IMR-90 (cell line): ENCODE measurements at regions of chr10 and their contacts with region 1.

Region 1: GRCh38 chr10:48551861-48552591 is 52.8 kb downstream of the ARHGAP22 start:
- DNase-seq: peak; percentile 59
- ATAC-seq: peak; percentile 88
- H3K4me3 ChIP-seq: no peak overlapping the region
- H3K27ac ChIP-seq: no peak overlapping the region
- H3K4me1 ChIP-seq: no peaks in the 10 kb centered on the region; the same call in 1 of the 2 replicates
- H3K27me3 ChIP-seq: no peaks in the 10 kb centered on the region
- CTCF ChIP-seq: peak; percentile 86
- POLR2A ChIP-seq: 0 out of 2 replicates have a peak, but pooled peaks have one; percentile 28
- RAD21 ChIP-seq: peak; percentile 86

Region 2: DNA sequence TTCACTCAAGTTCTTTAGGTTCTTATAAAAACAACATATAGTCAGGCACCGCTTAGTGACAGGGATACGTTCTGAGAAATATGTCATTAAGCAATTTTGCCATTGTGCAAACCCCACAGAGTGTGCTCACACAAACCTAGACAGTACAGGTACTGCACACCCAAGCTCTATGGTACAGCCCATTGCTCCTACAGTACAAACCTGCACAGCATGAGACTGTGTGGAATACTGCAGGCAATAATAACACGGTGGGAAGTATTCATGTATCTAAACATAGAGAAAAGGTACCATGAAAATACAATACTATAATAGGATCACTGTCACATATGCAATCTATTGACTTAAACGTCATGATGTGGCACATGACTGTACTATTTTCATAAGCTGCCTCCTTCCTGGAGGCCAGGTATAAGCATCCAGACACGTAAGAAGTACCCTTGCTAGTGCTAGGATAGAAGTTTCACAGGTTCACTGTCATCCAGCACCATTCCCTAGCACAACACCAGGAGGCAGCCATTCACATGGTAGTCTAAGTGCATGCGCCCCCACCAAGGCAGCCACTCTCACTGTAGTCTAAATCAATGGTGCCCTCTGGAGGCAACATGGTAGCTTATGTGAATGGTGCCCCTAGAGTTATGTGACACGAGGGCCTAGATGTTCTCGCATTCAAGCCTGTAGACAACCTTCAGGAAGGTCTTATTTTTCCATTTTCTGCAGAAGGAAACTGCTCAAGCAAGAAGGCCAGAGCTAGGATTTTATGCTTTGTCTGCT is 45.7 kb before region 1 on chr10:
- CTCF ChIA-PET with region 1: no interaction called
- POLR2A ChIA-PET with region 1: no interaction called
- dilution Hi-C with region 1: no loop called
- in situ Hi-C with region 1: no loop called
- intact Hi-C with region 1: no loop called
- DNase-seq: peak; percentile 56
- ATAC-seq: peak; percentile 71
- H3K4me3 ChIP-seq: no peak overlapping the region
- H3K27ac ChIP-seq: no peak overlapping the region
- H3K4me1 ChIP-seq: peaks cover 14% of the 10 kb centered on the region
- H3K27me3 ChIP-seq: no peaks in the 10 kb centered on the region
- CTCF ChIP-seq: peak; percentile 55
- POLR2A ChIP-seq: no peak
- RAD21 ChIP-seq: peak; percentile 63

Region 3: DNA sequence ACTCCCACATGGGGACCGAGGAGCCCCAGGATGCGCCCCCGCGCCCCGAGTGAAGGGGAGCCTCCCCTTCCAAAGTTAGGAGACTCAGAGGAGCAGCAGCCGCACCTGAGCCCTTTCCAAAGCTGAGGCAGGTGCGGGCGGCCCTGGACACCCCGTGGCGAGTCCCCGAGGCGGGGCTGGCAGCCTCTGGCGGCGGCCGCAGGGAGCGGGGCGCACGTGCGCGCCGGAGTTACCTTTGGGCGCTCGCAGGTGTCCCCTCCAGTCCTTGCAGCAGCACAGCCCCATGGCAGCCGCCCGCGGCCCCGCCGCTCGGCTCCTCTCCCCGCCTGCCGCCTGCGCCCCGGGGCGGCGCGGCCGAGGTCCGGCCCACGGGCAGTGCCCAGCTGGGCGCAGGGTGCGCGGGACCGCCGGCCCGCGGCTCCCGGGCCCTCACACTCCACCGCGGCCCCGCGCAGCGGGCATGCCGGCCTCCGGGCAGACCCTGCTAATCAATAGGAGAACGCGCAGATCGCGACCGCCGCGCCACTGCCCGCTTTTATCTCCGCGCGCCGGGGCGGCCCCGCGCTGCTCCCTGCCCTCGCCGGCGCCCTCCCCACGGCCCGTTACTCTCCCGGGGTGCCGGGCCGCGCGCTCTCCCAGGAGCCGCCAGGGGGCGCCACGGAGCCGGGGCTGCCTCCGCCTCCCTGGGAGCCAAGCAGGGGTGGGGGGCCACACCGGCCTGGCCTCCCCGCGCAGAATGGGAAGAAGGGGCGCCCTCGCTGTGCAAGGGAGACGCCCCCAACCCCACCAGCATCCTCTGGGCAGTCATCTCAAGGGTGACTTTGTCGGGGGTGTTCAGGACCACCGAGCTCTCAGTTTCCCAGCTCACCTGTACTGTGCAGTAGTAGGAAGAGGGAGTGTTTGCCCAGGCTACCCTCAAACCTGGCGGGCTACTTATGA is 27.9 kb before region 1 on chr10:
- CTCF ChIA-PET with region 1: no interaction called
- POLR2A ChIA-PET with region 1: no interaction called
- dilution Hi-C with region 1: no loop called
- in situ Hi-C with region 1: no loop called
- intact Hi-C with region 1: loop called (anchors 2 kb)
- DNase-seq: no peak
- ATAC-seq: peak; percentile 55
- H3K4me3 ChIP-seq: peak overlapping the region; percentile 42
- H3K27ac ChIP-seq: peak overlapping the region; percentile 15; the same call in 1 of the 2 replicates
- H3K4me1 ChIP-seq: peaks cover 21% of the 10 kb centered on the region
- H3K27me3 ChIP-seq: no peaks in the 10 kb centered on the region
- CTCF ChIP-seq: peak; percentile 59
- POLR2A ChIP-seq: no peak
- RAD21 ChIP-seq: peak; percentile 30

Region 4: GRCh38 chr10:48608279-48608681 is 56.3 kb after region 1 on chr10:
- CTCF ChIA-PET with region 1: interaction called, 3 read pairs
- POLR2A ChIA-PET with region 1: no interaction called
- dilution Hi-C with region 1: no loop called
- in situ Hi-C with region 1: no loop called
- intact Hi-C with region 1: loop called (anchors 10 kb)
- DNase-seq: no peak
- ATAC-seq: no peak
- H3K4me3 ChIP-seq: no peak overlapping the region
- H3K27ac ChIP-seq: peak overlapping the region; percentile 7; the same call in 1 of the 2 replicates
- H3K4me1 ChIP-seq: peaks cover 39% of the 10 kb centered on the region
- H3K27me3 ChIP-seq: no peaks in the 10 kb centered on the region
- CTCF ChIP-seq: peak; percentile 54
- POLR2A ChIP-seq: no peak
- RAD21 ChIP-seq: peak; percentile 30; the same call in 1 of the 2 replicates